ENCODE measurements at regions of chr9 and their contacts with region 1.

Region 1: GRCh38 chr9:137254624-137255447 is at the start of gene NELFB:
- DNase-seq: peak; percentile 100
- ATAC-seq: peak; percentile 90
- H3K4me3 Mint-ChIP-seq: peak within 1 kb of the TSS; percentile 90
- H3K27ac Mint-ChIP-seq: peak within 1 kb of the TSS; percentile 72
- H3K4me1 Mint-ChIP-seq: peaks cover 19% of the 10 kb centered on the region
- H3K27me3 Mint-ChIP-seq: no peaks in the 10 kb centered on the region
- CTCF ChIP-seq: no peak
- total RNA-seq, gene NELFB: 56.1 and 58.2 TPM in 2 replicates

Region 2: GRCh38 chr9:137269231-137269772 is 14.5 kb after region 1 on chr9:
- CTCF ChIA-PET with region 1: no interaction called
- POLR2A ChIA-PET with region 1: interaction called, 7 read pairs
- intact Hi-C with region 1: loop called (anchors 1 kb)
- DNase-seq: no peak
- ATAC-seq: peak; percentile 9
- H3K4me3 Mint-ChIP-seq: peak overlapping the region; percentile 33
- H3K27ac Mint-ChIP-seq: peak overlapping the region; percentile 44
- H3K4me1 Mint-ChIP-seq: peaks cover 39% of the 10 kb centered on the region
- H3K27me3 Mint-ChIP-seq: no peaks in the 10 kb centered on the region
- CTCF ChIP-seq: no peak

Region 3: DNA sequence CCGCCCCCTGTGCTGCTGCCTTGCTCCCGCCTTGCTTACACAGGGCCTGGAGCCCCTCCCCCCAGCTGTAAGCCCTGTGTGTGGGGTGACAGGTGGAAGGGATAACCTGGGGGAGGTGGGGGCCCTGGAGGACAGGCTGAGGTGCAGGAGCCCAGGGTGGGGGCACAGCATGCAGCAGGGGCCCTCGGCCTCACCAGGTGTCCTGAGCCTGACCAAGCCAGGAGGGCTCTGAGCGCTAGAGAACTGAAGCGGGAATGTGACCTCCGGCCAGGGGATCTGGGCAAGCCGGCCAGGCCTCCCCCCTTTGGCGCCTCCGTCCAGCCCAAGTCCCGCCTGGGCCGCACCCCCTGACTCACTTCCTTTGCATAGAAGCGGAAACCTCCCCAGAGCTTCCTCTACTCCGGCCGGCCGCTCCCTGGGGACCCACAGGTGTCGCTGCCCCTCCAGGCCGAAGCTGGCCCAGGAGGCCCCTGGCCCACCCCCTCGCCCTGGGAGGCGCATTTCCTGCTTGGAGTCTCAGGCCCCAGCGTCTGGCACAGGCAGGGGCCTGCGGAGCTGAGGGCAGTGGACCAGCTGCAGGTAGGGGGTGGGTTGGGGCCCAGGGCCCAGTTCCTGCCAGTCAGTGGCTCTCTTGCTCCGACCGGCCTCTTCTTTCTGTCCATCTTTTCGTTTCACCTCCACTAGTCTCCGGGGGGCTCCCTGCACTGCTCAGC is 22.6 kb after region 1 on chr9 and contains the start of gene TOR4A:
- CTCF ChIA-PET with region 1: no interaction called
- POLR2A ChIA-PET with region 1: interaction called, 11 read pairs
- intact Hi-C with region 1: no loop called
- DNase-seq: peak; percentile 61
- ATAC-seq: peak; percentile 70
- H3K4me3 Mint-ChIP-seq: peak within 1 kb of the TSS; percentile 85
- H3K27ac Mint-ChIP-seq: peak within 1 kb of the TSS; percentile 93
- H3K4me1 Mint-ChIP-seq: peaks cover 47% of the 10 kb centered on the region
- H3K27me3 Mint-ChIP-seq: no peaks in the 10 kb centered on the region
- CTCF ChIP-seq: no peak
- total RNA-seq, gene TOR4A: 7.9 and 9.1 TPM in 2 replicates

Measured in activated B cell treated with CpG ODN at 0.5 μM for 24 hours (primary cell).